HCT116 (cell line): ENCODE measurements at regions of chr2 and their contacts with region 1.

Region 1: DNA sequence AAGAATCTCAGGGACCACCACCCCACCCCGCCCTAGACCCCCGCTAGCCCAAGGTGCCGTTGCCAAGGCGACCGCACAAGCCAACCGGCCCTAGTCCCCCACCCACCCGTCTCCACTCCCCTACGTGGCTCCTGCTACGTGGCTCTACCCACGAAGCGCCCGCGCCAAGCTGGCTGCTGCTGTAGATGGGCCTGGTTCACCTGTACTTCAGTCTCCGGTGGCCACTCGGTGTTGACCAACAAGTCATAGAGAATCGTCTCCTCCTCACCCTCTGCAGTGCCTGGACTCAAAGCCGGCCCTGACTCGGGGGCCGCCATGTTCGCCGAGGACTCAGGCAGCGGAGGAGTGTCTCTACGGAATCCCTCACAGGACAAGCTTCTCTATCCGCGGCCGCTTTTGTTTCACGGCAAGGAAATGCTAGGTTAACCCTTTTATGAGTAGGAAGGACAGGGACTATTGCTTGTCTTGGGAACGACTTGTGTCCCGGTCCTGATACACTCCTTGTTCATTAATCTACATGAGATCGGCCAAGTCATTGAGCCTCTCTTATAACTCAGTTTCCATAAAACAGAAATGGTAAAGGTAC is at the start of gene NBAS:
- DNase-seq: peak; percentile 64
- ATAC-seq: peak; percentile 85
- H3K4me3 ChIP-seq: peak within 1 kb of the TSS; percentile 75 to 79
- H3K27ac ChIP-seq: peak within 1 kb of the TSS; percentile 32
- H3K4me1 ChIP-seq: peaks cover 2 to 13% of the 10 kb centered on the region in 2 experiments; a peak in 2 of 4 replicates
- H3K27me3 ChIP-seq: no peaks in the 10 kb centered on the region
- CTCF ChIP-seq: no peak
- POLR2A ChIP-seq: peak; percentile 32
- RAD21 ChIP-seq: no peak
- total RNA-seq, gene NBAS: 32.8 TPM

Region 2: GRCh38 chr2:15485949-15486348 is 75.1 kb before region 1 on chr2:
- CTCF ChIA-PET with region 1: no interaction called
- POLR2A ChIA-PET with region 1: no interaction called
- RAD21 ChIA-PET with region 1: no interaction called
- intact Hi-C with region 1: no loop called
- DNase-seq: no peak
- ATAC-seq: no peak
- H3K4me3 ChIP-seq: no peak overlapping the region
- H3K27ac ChIP-seq: no peak overlapping the region
- H3K4me1 ChIP-seq: no peaks in the 10 kb centered on the region
- H3K27me3 ChIP-seq: no peaks in the 10 kb centered on the region
- CTCF ChIP-seq: no peak
- POLR2A ChIP-seq: no peak
- RAD21 ChIP-seq: no peak

Region 3: DNA sequence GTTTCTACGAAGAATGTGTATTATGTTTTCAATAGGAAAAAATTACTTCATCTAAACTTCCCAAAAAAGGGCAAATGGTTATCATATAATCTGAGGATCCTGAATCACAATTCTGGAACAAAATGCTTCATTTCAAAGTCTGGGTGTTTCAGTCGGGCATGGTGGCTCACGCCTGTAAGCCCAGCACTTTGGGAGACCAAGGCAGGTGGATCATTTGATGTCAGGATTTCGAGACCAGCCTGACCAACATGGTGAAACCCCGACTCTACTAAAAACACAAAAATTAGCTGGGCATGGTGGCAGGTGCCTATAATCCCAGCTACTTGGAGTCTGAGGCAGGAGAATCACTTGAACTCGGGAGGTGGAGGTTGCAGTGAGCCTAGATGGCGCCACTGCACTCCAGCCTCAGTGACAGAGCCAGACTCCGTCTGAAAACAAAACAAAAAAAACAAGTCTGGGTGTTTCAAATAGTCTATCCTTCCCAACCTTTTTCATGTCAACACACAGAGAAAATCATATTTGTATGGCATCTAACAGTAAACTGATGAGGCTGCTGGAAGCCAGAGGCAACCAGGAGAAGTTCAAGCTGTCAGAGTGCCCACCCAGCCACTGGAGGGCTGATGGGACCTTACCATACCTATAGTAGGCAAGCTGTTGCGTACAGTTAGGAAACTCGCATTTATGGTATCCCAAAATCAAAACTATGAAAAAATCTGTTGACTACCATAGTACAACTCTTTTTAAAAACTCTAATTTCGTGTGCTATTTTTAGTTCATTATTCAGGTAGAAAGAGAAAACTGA is 14.6 kb before region 1 on chr2:
- CTCF ChIA-PET with region 1: interaction called, 12 read pairs
- POLR2A ChIA-PET with region 1: interaction called, 4 read pairs
- RAD21 ChIA-PET with region 1: no interaction called
- intact Hi-C with region 1: no loop called
- DNase-seq: no peak
- ATAC-seq: peak; percentile 78
- H3K4me3 ChIP-seq: no peak overlapping the region
- H3K27ac ChIP-seq: no peak overlapping the region
- H3K4me1 ChIP-seq: no peaks in the 10 kb centered on the region
- H3K27me3 ChIP-seq: no peaks in the 10 kb centered on the region
- CTCF ChIP-seq: peak; percentile 3 to 59 (median 49); a peak in 4 of 6 replicates
- POLR2A ChIP-seq: no peak
- RAD21 ChIP-seq: peak; percentile 16; the same call in 1 of the 2 replicates

Region 4: DNA sequence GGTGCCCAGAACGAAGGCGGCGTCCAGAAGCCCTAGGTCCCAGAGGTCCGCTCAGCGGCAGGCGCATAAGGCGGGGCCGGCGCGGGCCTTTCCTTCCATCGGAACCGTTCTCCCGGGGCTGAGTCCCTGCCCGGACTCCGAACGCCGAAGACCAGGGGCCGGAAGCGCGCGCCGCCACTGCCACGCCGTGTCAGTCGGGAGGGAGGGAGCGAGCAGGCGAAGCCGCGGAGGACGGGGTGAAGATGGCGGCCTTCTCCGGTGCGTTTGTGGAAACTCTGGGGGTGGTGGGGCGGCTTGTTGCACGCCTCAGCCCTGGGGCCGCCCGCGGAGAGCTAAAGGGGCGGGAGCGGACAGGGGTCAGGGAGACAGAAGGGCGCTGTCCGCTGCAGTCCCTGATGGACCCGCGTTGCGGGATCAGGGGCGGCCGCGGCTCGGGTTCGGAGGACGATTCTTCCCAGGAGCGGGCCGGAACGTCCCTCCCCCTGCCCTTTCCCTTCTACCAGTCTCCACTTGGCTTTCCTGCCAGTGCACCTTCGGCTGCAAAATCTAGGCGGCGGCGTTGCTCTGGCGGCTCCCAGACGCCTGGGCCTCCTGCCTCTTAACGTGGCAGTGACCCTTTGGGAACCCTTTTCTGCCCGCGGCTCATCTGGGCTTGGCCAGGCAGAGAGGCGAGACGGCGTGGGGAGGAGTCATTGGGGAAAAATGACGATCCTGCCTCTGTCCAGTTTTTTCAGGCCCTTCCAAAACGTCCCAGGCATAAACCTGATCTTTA is 30.8 kb after region 1 on chr2 and contains the start of gene DDX1:
- CTCF ChIA-PET with region 1: no interaction called
- POLR2A ChIA-PET with region 1: no interaction called
- RAD21 ChIA-PET with region 1: no interaction called
- intact Hi-C with region 1: loop called (anchors 2 kb)
- DNase-seq: peak; percentile 54
- ATAC-seq: peak; percentile 91
- H3K4me3 ChIP-seq: peak within 1 kb of the TSS; percentile 93 to 97
- H3K27ac ChIP-seq: peak within 1 kb of the TSS; percentile 88
- H3K4me1 ChIP-seq: peaks cover 0 to 10% of the 10 kb centered on the region in 2 experiments; a peak in 2 of 4 replicates
- H3K27me3 ChIP-seq: no peaks in the 10 kb centered on the region
- CTCF ChIP-seq: no peak
- POLR2A ChIP-seq: peak; percentile 45
- RAD21 ChIP-seq: no peak
- total RNA-seq, gene DDX1: 117 TPM

Region 5: GRCh38 chr2:15765686-15766302 is 204.7 kb after region 1 on chr2:
- CTCF ChIA-PET with region 1: no interaction called
- POLR2A ChIA-PET with region 1: no interaction called
- RAD21 ChIA-PET with region 1: no interaction called
- intact Hi-C with region 1: no loop called
- DNase-seq: no peak
- ATAC-seq: no peak
- H3K4me3 ChIP-seq: no peak overlapping the region
- H3K27ac ChIP-seq: no peak overlapping the region
- H3K4me1 ChIP-seq: no peaks in the 10 kb centered on the region
- H3K27me3 ChIP-seq: peaks cover 5% of the 10 kb centered on the region; the same call in 1 of the 2 replicates
- CTCF ChIP-seq: no peak
- POLR2A ChIP-seq: no peak
- RAD21 ChIP-seq: no peak

Region 6: DNA sequence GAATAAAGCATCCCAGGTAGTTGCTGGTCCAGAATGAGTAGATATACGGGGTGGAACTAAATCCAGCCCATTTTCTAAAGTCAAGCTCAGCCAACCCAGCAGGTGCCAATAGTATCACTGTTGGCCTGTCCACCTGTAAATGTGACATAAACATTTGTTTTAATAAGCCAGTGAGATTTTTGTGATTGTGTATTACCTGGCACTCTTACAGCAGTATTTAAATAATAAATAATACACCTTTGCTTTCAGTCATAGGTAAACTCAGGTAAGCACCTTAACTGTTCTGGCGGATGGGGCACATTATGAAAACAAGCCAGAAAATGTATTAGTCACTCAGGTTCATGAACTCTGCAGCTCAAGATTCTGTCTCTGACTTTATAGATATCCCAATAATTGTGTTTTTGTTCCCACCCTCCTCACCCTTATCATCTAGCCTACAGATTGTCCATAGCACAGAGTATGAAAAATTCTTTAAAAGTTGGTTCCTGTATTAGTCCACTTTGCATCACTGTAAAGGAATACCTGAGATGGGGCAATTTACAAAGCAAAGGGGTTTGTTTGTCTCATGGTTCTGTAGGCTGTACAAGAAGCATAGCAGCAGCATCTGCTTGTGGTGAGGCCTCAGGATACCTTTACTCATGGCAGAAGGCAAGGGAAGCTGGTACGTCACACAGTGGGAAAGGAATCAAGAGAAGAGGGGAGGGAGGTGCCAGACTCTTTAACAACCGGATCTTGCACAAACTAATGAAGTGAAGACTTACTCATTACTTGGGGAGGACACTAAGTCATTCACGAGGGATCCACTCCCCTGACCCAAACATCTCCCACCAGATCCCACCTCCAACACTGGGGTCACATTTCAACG is 1177.5 kb after region 1 on chr2:
- CTCF ChIA-PET with region 1: no interaction called
- POLR2A ChIA-PET with region 1: no interaction called
- RAD21 ChIA-PET with region 1: no interaction called
- intact Hi-C with region 1: no loop called
- DNase-seq: no peak
- ATAC-seq: no peak
- H3K4me3 ChIP-seq: no peak overlapping the region
- H3K27ac ChIP-seq: no peak overlapping the region
- H3K4me1 ChIP-seq: no peaks in the 10 kb centered on the region
- H3K27me3 ChIP-seq: peaks cover 5% of the 10 kb centered on the region; the same call in 1 of the 2 replicates
- CTCF ChIP-seq: no peak
- POLR2A ChIP-seq: no peak
- RAD21 ChIP-seq: no peak